Activated CD4-positive, alpha-beta T cell treated with anti-CD3 and anti-CD28 coated beads, Interleukin-2, amount 10 ng/mL, durations not matched to agents 24 days and 14 days (primary cell): ENCODE measurements at regions of chr9 and their contacts with region 1.

Region 1: DNA sequence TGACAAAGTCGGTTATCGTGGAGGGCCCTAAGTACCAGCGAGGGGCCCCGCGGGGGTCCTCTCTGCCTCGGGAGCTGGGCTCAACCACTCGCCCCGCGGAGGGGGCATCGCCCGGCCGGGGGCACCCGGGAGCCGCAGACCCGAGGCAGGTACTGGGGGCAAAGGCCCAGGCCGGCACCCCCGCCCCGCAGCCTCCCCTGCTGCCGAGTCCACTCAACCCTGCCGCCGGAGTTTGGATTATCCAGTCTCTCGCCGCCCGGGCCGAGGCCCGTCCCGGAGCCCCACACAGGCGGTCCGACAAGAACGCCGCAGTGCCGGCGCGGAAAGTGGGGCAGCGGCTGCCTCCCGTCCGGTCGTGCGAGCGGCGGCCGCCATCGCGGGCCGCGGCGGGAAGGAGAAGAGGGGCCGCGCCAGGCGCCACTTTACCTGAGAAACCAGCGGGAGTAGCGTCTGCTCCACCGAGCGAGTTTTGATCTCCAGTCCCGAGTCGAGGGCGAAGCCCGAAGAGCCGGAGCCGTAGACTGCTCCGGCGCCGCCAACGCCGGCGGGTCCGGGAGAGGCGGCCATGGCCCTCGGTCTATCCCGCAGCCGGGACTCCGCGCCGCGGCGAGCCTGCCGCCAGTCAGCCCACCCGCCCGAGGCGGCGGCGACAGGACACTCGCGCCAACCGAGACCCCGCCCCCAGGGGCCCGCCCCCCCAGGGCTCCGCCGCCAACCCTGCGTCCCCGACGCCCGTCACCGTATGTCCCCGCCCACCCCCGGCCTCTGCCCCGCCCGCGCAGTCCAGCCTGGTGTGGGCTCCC is at the start of gene CTNNAL1:
- DNase-seq: peak; percentile 96
- H3K4me3 Mint-ChIP-seq: peak within 1 kb of the TSS; percentile 99
- H3K27ac Mint-ChIP-seq: peak within 1 kb of the TSS; percentile 97
- H3K4me1 Mint-ChIP-seq: peaks cover 24% of the 10 kb centered on the region
- H3K27me3 Mint-ChIP-seq: peaks cover 4% of the 10 kb centered on the region
- total RNA-seq, gene CTNNAL1: 17.8 and 18.8 TPM in 2 replicates

Region 2: GRCh38 chr9:108310202-108310601 is 702.9 kb before region 1 on chr9:
- intact Hi-C with region 1: no loop called
- DNase-seq: peak; percentile 30
- H3K4me3 Mint-ChIP-seq: no peak overlapping the region
- H3K27ac Mint-ChIP-seq: no peak overlapping the region
- H3K4me1 Mint-ChIP-seq: no peaks in the 10 kb centered on the region
- H3K27me3 Mint-ChIP-seq: no peaks in the 10 kb centered on the region

Region 3: DNA sequence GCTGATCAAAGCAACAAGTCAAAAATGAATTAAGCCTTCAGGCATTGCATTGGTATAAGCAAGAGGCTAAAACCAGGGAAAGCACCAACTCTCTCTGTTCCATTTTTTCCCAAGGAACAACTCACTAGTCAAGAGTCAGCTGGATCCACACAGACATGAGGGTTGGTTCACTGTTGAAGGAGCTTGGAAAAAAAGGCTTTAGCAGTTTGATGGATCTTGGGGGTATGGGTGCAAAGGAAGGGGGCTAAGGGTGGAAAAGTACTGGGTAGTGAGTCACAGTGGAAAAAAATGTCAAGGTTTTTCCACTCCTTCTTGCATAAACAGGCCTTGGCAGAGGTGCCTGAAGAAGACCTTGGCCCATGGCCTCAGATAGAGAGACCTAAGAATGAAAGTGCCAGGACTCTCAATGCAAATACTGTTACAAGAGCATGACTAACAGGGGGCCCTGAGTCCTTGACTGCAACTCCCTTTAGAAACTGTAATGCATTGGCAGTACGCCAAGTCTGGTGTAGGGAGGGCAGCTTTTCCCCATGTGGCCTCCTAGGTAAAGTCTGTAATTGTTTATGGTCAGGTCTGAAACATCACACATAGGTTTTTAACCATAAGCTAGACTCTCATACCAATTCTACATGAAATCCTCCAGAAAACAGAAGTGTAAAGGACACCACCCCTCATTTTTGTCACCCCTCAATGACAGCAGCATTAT is 127.3 kb before region 1 on chr9:
- intact Hi-C with region 1: loop called (anchors 5 kb)
- DNase-seq: peak; percentile 59
- H3K4me3 Mint-ChIP-seq: peak overlapping the region; percentile 54
- H3K27ac Mint-ChIP-seq: peak overlapping the region; percentile 89
- H3K4me1 Mint-ChIP-seq: peaks cover 11% of the 10 kb centered on the region
- H3K27me3 Mint-ChIP-seq: no peaks in the 10 kb centered on the region

Region 4: DNA sequence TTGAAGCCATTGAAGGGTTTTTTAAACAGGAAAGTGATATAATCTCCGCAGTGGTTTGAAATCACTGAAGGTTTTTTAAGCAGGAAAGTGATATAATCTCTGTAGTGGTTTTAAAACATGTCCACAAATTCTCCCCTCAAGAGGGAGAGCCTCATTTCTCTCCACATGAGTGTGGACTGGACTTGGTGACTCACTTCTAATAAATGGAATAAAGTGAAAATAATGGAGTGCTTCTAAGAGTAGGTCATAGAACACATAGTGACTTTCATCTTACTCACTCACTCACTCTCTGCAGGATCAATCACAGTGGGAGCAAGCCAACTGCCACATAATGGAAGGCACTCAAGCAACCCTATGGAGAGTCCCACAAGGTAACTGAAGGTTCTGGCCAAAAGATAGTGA is 11.8 kb before region 1 on chr9:
- intact Hi-C with region 1: loop called (anchors 1 kb)
- DNase-seq: no peak
- H3K4me3 Mint-ChIP-seq: no peak overlapping the region
- H3K27ac Mint-ChIP-seq: no peak overlapping the region
- H3K4me1 Mint-ChIP-seq: peaks cover 4% of the 10 kb centered on the region
- H3K27me3 Mint-ChIP-seq: peaks cover 3% of the 10 kb centered on the region

Region 5: DNA sequence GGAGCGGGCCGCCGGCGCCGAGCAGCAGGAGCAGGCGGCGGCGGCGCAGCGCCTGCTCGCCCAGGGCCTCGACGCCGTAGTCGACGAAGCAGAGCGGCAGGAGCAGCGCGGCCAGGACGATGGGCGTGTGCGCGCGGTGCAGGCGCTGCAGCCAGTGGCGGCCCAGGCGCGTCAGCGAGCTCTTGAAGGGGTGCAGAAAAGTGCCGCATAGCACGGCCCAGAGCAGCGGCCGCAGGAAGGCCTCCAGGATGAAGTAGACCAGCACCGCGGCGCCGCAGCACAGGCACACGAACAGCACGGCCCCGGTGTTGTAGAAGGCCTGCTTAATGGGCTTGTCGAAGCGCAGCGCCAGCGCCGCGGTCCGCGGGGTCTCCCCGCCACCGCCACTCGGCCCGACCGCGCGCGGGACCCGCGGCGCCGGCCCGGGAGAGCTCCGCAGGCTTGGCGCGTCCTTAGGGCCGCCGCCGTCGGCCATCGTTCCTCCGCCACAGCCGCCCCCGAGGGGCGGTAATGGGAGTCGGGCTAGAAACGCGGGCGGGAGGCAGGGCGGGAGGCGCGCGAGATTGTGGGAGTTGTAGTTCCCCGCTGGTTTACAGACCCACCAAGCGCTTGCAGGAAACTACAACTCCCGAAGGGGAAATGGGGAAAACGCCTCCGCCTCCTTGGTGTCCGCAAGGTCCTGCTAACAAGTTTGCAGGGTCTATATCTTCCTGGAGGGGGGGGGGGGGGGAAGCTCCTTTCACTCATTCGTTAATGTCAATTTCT is 106.5 kb after region 1 on chr9 and contains the start of gene TMEM245:
- intact Hi-C with region 1: loop called (anchors 1 kb)
- DNase-seq: peak; percentile 98
- H3K4me3 Mint-ChIP-seq: peak within 1 kb of the TSS; percentile 90
- H3K27ac Mint-ChIP-seq: peak within 1 kb of the TSS; percentile 94
- H3K4me1 Mint-ChIP-seq: peaks cover 38% of the 10 kb centered on the region
- H3K27me3 Mint-ChIP-seq: no peaks in the 10 kb centered on the region
- total RNA-seq, gene TMEM245: 26.7 and 27.0 TPM in 2 replicates

Region 6: GRCh38 chr9:109411798-109412352 is 398.8 kb after region 1 on chr9:
- intact Hi-C with region 1: loop called (anchors 5 kb)
- DNase-seq: peak; percentile 79
- H3K4me3 Mint-ChIP-seq: peak overlapping the region; percentile 6
- H3K27ac Mint-ChIP-seq: peak overlapping the region; percentile 90
- H3K4me1 Mint-ChIP-seq: peaks cover 46% of the 10 kb centered on the region
- H3K27me3 Mint-ChIP-seq: no peaks in the 10 kb centered on the region

Region 7: DNA sequence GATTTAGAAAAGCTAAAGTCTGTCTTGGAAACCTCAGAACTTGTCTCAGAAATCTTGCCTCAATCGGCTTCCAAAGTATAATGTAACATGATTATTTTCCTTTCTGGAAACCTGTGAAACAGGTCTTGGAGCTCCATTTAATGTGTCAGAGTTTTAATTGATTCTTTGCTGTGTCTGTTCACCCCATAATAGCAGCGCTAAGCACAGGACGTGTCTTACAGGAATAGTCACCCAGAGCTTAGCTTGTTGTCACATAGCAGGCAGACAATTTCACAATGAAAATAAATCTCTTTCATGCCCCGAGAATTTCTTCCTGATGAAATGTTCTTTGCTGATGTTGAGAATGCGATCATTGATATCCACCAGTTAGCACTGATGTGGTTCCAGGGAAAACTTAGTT is 525.3 kb after region 1 on chr9:
- intact Hi-C with region 1: no loop called
- DNase-seq: no peak
- H3K4me3 Mint-ChIP-seq: no peak overlapping the region
- H3K27ac Mint-ChIP-seq: no peak overlapping the region
- H3K4me1 Mint-ChIP-seq: no peaks in the 10 kb centered on the region
- H3K27me3 Mint-ChIP-seq: peaks cover 12% of the 10 kb centered on the region

Region 8: DNA sequence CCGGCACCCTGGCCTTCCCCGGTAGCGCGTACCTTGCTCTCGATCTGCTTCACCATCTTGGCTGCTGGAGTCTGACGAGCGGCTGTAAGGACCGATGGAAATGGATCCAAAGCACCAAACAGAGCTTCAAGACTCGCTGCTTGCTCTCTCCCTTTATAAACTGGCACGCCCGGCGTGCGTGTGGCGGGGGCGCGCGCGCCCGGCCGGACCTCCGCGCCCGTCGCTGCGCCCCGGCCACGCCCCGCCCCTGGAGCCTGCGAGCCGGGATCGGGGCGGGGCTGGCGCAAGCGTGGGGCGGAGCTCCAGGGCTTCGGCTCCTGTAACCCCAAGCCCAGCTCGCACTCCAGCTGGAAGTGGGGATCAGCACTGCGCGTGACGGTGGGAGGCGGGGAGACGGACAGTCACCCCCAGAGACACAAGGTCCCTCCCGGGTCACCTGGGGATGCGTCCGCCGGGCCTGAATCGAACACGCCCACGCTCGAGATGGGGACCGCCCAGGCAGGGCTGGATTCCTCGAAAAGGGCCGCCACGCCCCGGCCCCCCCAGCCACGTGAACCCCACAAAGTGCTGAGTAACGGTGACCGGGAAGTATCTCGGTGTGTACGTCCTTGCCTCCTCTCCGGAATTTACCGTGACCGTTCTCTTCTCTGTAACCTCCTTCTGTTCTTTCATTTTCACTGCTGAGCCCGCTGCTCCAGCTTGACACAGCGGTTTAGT is 1243.5 kb after region 1 on chr9 and contains the start of gene TXN:
- intact Hi-C with region 1: loop called (anchors 10 kb)
- DNase-seq: peak; percentile 96
- H3K4me3 Mint-ChIP-seq: peak within 1 kb of the TSS; percentile 96
- H3K27ac Mint-ChIP-seq: peak within 1 kb of the TSS; percentile 99
- H3K4me1 Mint-ChIP-seq: peaks cover 43% of the 10 kb centered on the region
- H3K27me3 Mint-ChIP-seq: peaks cover 4% of the 10 kb centered on the region
- total RNA-seq, gene TXN: 463 TPM in 2 replicates